ENCODE measurements at regions of chr13 and their contacts with region 1.

Region 1: GRCh38 chr13:110108347-110109174 is 198.4 kb downstream of the COL4A1 start:
- DNase-seq: peak; percentile 90
- ATAC-seq: peak; percentile 94

Region 2: GRCh38 chr13:108961542-108962125 is 1146.9 kb before region 1 on chr13:
- intact Hi-C with region 1: loop called (anchors 10 kb)
- DNase-seq: no peak
- ATAC-seq: peak; percentile 94

Region 3: GRCh38 chr13:109145631-109146030 is 962.9 kb before region 1 on chr13:
- intact Hi-C with region 1: loop called (anchors 10 kb)
- DNase-seq: no peak
- ATAC-seq: peak; percentile 89

Region 4: GRCh38 chr13:109786457-109787134 is 322.0 kb before region 1 on chr13 and contains the start of gene IRS2:
- intact Hi-C with region 1: loop called (anchors 5 kb)
- DNase-seq: peak; percentile 95
- ATAC-seq: peak; percentile 82
- total RNA-seq, gene IRS2: 12.1 TPM

Measured in Right ventricle myocardium superior (tissue), 1 donor.